OCI-LY7 (cell line): ENCODE measurements at regions of chr15 and their contacts with region 1.

Region 1: DNA sequence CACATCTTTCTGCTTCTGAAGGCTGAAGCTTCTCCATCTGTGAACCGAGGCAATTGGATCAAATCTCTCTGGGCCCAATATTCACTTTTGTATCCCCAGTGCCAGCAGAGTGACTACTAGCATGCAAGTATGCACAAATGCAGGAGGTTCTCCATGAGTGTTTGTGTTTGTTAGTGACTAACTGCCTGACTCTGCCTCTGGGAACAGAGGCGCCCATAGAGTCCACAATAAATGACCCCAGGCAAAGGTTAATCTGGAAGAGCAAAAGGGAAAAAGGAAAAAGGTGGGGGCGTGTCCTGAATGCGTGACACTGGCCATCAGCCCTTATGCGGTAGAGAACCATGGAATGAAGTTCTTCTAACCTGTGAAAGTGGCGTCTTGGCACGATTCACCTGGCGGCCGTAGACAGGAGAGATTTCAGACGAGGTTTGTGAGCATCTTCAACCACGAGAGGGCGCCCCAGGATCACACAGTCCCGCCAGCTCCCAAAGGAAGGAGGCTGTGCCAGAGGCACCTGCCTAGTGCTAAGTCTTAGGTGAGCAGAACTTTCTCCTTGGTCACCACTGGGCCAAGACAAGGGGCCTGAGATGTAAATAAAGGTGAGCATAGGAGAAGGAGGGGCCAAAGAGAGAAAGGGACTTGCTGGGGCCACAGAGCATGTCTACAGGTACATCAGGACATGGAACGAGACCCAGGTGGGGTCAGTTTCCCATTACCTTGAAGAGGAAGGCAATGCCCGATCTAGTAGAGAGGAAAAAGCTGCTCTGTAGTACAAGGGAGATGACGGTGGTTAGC is 44.2 kb downstream of the RBPMS2 start:
- DNase-seq: peak; percentile 86
- H3K4me3 ChIP-seq: no peak overlapping the region
- H3K27ac ChIP-seq: no peak overlapping the region
- H3K4me1 ChIP-seq: no peaks in the 10 kb centered on the region
- CTCF ChIP-seq: peak; percentile 96

Region 2: DNA sequence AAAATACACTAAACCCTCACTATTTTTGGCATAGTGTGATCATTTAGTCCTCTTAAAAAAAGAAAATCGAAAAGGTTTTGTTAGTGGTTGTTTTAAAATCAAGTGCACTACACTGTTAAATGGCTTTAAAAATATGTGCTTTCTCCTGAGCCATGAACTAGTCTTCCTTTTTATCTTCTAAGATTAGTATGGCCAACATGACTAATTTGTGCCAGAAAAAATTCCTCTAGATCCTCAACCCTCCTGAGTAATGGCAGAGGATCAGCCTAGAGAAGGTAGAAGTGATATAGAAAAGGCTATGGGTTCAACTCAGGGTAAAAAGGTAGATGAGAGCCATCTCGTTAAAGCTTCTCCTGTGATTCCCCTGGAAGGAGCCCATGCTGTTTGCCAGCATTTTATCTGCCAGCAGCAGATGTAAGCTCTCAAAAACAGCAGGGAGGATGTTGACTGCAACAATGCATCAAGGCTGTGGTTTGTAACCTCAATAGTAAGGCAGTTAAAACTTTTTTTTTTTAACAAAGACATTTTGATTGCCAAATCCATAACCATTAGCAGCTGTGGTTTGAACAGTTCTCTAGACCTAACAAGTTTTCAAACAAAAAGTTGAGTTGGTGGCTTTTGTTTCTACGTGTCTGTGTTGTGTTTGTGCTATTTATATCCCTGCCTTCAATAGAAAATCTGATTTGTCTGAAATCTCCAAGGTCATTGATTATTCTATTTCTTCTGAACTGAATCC is 301.0 kb before region 1 on chr15:
- CTCF ChIA-PET with region 1: no interaction called
- POLR2A ChIA-PET with region 1: no interaction called
- intact Hi-C with region 1: loop called (anchors 2 kb)
- DNase-seq: no peak
- H3K4me3 ChIP-seq: no peak overlapping the region
- H3K27ac ChIP-seq: no peak overlapping the region
- H3K4me1 ChIP-seq: no peaks in the 10 kb centered on the region
- CTCF ChIP-seq: no peak

Region 3: DNA sequence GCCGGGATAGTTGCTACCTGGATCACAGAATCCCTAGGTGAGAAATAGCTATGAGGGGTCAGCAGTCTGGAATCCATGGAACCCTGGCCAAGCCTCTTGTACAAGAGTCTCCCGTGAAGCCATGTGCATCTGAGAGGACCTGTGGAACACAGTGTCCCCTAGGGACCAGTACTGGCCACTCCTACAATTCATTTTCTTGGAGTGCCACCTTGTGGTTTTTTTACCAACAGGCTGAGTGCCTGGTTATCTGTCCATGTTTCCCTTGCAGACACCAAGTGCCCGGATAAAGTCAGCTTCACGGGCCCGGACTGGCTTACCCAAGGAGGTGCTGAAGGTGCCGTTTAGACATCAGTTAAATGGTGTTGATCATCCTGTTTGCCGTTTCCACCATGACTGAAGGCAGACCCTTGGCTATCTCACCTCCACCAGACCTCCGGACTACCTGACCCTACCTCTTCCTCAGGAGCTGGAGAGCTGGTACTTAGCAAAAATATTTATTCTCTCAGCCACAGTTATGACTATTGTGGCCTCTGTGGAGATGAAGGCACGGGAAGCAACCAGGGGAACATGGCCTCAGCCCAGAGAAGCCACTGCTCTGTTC is 49.7 kb before region 1 on chr15:
- CTCF ChIA-PET with region 1: interaction called, 10 read pairs
- POLR2A ChIA-PET with region 1: no interaction called
- intact Hi-C with region 1: loop called (anchors 1 kb)
- DNase-seq: peak; percentile 44
- H3K4me3 ChIP-seq: no peak overlapping the region
- H3K27ac ChIP-seq: no peak overlapping the region
- H3K4me1 ChIP-seq: no peaks in the 10 kb centered on the region
- CTCF ChIP-seq: peak; percentile 72

Region 4: DNA sequence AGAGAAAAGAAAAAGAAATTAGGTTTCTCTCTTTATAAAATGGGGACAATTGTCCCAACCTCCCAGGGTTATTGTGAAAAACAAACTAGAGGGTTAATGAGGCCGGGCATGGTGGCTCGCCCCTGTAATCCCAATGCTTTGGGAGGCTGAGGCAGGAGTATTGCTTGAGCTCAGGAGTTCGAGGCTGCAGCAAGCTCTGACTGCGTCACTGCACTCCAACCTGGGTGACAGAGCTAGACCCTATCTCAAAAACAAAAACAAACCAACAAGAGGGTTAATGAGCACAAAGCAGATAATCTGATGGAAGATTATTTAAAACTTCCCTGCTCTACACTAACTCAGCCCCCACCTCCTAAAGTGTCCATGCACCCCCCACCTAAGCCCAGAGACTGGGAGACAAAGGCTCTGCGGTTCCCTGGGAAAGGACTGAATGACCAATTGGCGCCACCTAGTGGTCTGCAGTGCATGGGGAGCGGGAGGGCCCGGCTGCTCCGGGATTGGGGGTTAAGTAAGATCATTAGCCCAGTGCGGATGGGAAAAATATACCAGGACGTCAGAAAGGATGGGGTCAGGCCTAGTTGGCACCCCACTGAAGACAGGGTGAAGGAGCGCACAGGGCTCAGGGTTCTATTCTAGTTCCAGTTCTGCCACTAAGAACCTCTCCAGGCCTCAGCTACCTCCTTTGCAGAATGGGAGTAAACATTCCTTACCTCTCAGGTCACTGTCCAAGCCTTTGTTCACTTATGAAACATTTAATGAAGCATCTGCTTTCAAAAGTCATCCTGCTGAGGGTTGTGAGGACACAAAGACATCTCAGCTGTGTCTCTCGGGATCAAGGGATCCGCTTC is 78.7 kb after region 1 on chr15:
- CTCF ChIA-PET with region 1: interaction called, 3 read pairs
- POLR2A ChIA-PET with region 1: no interaction called
- intact Hi-C with region 1: loop called (anchors 1 kb)
- DNase-seq: peak; percentile 74
- H3K4me3 ChIP-seq: no peak overlapping the region
- H3K27ac ChIP-seq: no peak overlapping the region
- H3K4me1 ChIP-seq: no peaks in the 10 kb centered on the region
- CTCF ChIP-seq: peak; percentile 99

Region 5: DNA sequence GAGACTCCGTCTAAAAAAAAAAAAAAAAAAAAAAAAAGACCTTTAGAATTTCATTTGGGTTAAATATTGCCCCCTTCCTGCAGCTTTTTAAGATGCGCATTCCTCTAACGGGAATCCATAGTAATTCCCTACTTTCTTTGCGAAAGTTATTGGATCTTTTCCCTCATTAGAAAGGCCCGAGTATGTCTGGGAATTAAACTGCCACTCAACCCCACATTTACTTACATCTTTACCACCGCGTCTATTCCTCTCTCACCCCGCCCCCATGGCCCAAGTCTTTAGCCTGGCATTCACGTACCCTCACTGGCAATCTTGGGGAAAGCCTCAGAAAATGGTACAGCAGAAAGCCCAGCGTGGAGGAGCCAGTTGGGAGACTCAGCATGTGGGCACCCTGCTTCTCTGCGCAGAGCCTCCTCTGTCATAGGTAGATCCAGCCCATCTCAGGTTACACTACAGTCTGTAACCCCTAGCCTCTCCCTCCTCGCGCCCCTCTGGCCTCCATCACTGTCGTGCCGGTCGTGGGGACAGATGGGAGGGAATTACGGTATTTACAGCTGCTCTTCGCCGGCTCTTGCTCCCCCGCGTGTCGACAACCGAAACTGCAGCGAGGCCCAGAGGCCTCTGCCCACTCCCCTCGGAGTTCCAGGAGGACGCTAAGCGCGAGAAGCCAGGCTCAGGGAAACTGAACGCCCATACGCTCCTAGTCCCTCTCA is 174.1 kb after region 1 on chr15:
- CTCF ChIA-PET with region 1: interaction called, 3 read pairs
- POLR2A ChIA-PET with region 1: no interaction called
- intact Hi-C with region 1: loop called (anchors 2 kb)
- DNase-seq: peak; percentile 69
- H3K4me3 ChIP-seq: peak overlapping the region; percentile 41
- H3K27ac ChIP-seq: no peak overlapping the region
- H3K4me1 ChIP-seq: peaks cover 10% of the 10 kb centered on the region
- CTCF ChIP-seq: peak; percentile 85